GM12878 (cell line): ENCODE measurements at regions of chr18 and their contacts with region 1.

Region 1: DNA sequence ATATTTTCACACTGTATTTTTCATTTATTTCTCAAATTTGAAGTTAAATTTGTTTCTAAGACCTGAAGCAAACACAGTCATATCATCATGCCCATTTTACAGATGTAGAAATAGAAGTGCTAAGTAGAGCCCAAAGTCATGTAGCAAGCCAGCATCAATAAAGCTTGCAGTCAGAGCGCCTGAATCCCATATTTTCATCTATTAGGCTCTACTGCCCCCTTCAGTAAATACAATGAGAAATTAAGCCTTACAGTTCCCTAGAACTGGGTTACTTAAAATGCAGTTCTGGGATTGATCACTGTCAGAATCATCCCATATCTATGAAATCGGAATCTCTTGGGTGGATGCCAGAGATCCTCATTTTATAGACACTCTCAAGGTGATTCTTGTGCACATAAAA is 419.9 kb downstream of the TGIF1 start:
- DNase-seq: no peak
- ATAC-seq: peak; percentile 44; the same call in 2 of the 3 replicates
- H3K4me3 ChIP-seq: no peak overlapping the region
- H3K27ac ChIP-seq: no peak overlapping the region
- H3K4me1 ChIP-seq: no peaks in the 10 kb centered on the region
- H3K27me3 ChIP-seq: no peaks in the 10 kb centered on the region
- CTCF ChIP-seq: peak in 1 of 3 experiments; percentile 33; a peak in 1 of 6 replicates
- EP300 ChIP-seq: no peak
- POLR2A ChIP-seq: no peak
- RAD21 ChIP-seq: peak; percentile 46

Region 2: DNA sequence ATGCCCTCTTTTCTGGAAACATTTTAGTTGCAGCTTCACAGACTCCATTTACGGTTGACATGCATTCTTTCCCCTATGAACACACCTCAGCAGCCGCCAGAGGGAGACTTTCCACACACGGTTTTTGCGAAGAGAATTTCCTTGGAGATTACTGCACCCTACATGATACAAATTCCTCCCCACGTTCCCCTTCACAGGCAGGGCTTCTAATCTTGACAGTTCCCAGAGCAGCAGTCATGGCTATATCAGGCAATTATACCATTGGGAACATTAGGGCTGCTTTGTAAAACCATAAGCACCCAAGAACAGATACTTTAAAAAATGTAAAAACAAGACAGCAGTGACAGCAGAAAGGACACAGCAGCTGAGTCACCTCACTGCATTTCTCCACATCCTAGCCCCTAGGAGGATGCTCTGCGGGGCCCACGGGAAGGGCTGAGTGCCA is 166.1 kb before region 1 on chr18:
- CTCF ChIA-PET with region 1: interaction called, 13 read pairs
- POLR2A ChIA-PET with region 1: no interaction called
- RAD21 ChIA-PET with region 1: interaction called, 4 read pairs
- SMC1A ChIA-PET with region 1: interaction called, 8 read pairs
- in situ Hi-C with region 1: no loop called
- intact Hi-C with region 1: no loop called
- DNase-seq: no peak
- ATAC-seq: peak; percentile 79
- H3K4me3 ChIP-seq: no peak overlapping the region
- H3K27ac ChIP-seq: no peak overlapping the region
- H3K4me1 ChIP-seq: no peaks in the 10 kb centered on the region
- H3K27me3 ChIP-seq: no peaks in the 10 kb centered on the region
- CTCF ChIP-seq: peak; percentile 60 to 74 (median 61)
- EP300 ChIP-seq: no peak
- POLR2A ChIP-seq: no peak
- RAD21 ChIP-seq: peak; percentile 55

Region 3: DNA sequence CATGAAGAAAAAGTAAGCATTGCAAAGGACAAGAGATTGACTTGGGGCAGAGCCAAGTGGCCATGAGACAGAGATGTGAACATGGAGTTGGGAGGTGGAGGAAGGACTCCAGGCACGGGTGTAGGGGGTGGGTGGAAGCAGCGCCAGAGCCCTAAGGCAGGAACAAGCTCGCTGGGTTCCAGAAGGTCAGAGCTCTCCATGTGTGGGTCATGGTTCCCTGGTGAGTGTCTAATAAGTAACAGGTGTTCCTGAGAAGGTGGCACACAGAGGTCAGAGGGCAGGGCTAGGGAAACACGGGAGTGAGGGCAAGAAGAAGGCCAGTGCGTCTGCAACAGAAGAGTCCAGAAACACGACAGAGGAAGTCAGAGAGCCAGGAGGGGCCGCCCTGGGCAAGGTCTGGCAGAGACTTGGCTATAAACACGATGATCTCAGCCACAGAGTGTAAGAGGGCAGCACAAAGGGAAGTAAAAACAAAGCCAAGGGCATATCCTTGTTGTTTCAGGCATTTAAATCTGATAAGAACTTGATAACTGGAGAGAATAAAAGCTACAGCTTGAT is 159.1 kb before region 1 on chr18:
- CTCF ChIA-PET with region 1: no interaction called
- POLR2A ChIA-PET with region 1: no interaction called
- RAD21 ChIA-PET with region 1: interaction called, 3 read pairs
- SMC1A ChIA-PET with region 1: interaction called, 4 read pairs
- in situ Hi-C with region 1: no loop called
- intact Hi-C with region 1: loop called (anchors 5 kb)
- DNase-seq: no peak
- ATAC-seq: peak; percentile 34; the same call in 2 of the 3 replicates
- H3K4me3 ChIP-seq: no peak overlapping the region
- H3K27ac ChIP-seq: no peak overlapping the region
- H3K4me1 ChIP-seq: no peaks in the 10 kb centered on the region
- H3K27me3 ChIP-seq: no peaks in the 10 kb centered on the region
- CTCF ChIP-seq: no peak
- EP300 ChIP-seq: no peak
- POLR2A ChIP-seq: no peak
- RAD21 ChIP-seq: no peak

Region 4: DNA sequence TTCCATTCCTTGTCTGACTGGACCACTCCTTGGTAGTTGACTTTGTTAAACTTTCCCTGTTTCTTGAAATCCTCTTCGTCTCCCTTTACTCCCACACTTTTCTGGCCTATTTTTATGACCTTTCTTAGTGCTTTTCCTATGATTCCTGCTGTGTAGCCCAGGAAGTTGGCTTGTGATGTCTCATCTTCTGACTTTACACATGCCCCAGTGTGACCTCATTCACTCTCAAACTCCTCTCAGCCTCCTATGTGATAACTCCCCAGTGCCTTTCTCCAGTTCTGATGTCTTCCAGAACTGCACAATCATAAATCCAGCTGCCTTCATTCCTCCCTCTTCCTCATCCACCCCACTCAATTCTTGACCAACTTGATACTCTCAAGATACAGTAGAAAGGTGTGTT is 12.3 kb before region 1 on chr18:
- CTCF ChIA-PET with region 1: interaction called, 10 read pairs
- POLR2A ChIA-PET with region 1: no interaction called
- RAD21 ChIA-PET with region 1: interaction called, 3 read pairs
- SMC1A ChIA-PET with region 1: interaction called, 6 read pairs
- in situ Hi-C with region 1: no loop called
- intact Hi-C with region 1: no loop called
- DNase-seq: no peak
- ATAC-seq: no peak
- H3K4me3 ChIP-seq: no peak overlapping the region
- H3K27ac ChIP-seq: no peak overlapping the region
- H3K4me1 ChIP-seq: no peaks in the 10 kb centered on the region
- H3K27me3 ChIP-seq: no peaks in the 10 kb centered on the region
- CTCF ChIP-seq: no peak
- EP300 ChIP-seq: no peak
- POLR2A ChIP-seq: no peak
- RAD21 ChIP-seq: no peak